HAP-1 (cell line): ENCODE measurements at regions of chr4 and their contacts with region 1.

Region 1: GRCh38 chr4:121656269-121656641 is 40.5 kb downstream of the ANXA5 start:
- DNase-seq: peak; percentile 48 to 69
- H3K4me3 ChIP-seq: no peak overlapping the region
- H3K4me1 ChIP-seq: no peaks in the 10 kb centered on the region
- H3K27me3 ChIP-seq: no peaks in the 10 kb centered on the region

Region 2: DNA sequence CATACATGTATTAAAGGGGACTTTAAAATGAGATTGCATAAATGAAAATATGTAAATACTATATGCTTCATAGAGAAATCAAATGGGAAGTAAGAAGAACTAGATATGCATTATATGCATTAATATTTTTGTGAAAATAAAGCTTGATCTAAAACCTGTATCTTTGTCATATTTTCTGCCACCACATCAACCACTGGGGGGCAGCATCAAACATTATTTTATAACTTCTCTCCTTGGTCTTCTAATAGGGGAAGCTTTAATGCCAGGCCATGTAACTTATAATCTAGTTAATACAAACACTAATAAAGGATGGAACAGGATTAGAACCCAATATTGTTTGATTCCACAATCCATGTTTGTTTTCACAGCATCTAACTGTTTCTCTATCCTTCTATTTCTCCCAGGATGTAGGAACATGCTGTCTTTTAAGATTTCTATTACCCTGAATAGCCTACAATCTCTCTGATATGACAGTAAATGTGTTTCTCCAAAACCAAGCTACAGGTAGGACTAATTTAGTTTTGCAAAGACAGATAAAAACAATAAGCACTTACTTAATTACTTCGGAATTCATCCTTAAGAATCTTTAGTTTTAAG is 285.4 kb before region 1 on chr4:
- in situ Hi-C with region 1: loop called (anchors 25 kb)
- DNase-seq: peak; percentile 43 to 65
- H3K4me3 ChIP-seq: no peak overlapping the region
- H3K4me1 ChIP-seq: no peaks in the 10 kb centered on the region
- H3K27me3 ChIP-seq: no peaks in the 10 kb centered on the region

Region 3: GRCh38 chr4:121484633-121485032 is 171.6 kb before region 1 on chr4:
- in situ Hi-C with region 1: loop called (anchors 10 kb)
- DNase-seq: peak; percentile 41 to 46
- H3K4me3 ChIP-seq: no peak overlapping the region
- H3K4me1 ChIP-seq: no peaks in the 10 kb centered on the region
- H3K27me3 ChIP-seq: no peaks in the 10 kb centered on the region